Heart right ventricle (tissue), 16 donors: ENCODE measurements at regions of chr1 and their contacts with region 1.

Region 1: GRCh38 chr1:184805667-184806295 is 51.1 kb upstream of the EDEM3 start:
- DNase-seq: peak; percentile 86 to 91
- ATAC-seq: peak; percentile 91 to 98 (median 95)
- H3K4me3 ChIP-seq: no peak overlapping the region
- H3K27ac ChIP-seq: peak overlapping the region in 8 of 10 donors; percentile 7 to 83 (median 41)
- H3K4me1 ChIP-seq: peaks cover 0 to 21% (median 9%) of the 10 kb centered on the region in 9 donors
- H3K27me3 ChIP-seq: no peaks in the 10 kb centered on the region
- CTCF ChIP-seq: peak; percentile 75 to 97 (median 92)

Region 2: DNA sequence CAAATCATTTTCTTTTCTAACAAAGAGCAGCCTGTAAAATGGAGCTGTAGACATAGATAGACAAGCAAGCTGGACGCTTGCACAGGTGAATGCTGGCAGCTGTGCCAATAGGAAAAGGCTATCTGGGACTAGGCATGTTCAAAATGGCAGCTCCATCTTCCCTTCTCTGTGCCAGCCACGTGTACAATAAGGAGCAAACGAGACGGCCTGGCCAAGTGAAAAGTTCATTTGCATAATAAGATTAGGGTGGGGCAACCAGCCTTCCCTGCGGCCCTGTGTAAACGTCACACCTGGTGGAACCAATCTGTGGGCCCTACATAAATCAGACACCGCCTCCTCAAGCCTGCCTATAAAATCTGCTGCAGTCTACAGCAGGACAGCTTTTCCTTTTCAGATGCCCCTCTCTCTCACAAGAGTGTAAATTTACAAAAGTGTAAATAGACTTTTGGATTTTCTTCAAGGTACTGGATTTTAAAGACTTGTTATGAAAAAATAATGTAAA is 34.5 kb before region 1 on chr1:
- intact Hi-C with region 1: no loop called
- DNase-seq: no peak
- ATAC-seq: no peak
- H3K4me3 ChIP-seq: no peak overlapping the region
- H3K27ac ChIP-seq: no peak overlapping the region
- H3K4me1 ChIP-seq: no peaks in the 10 kb centered on the region
- H3K27me3 ChIP-seq: no peaks in the 10 kb centered on the region
- CTCF ChIP-seq: no peak

Region 3: GRCh38 chr1:184878002-184878401 is 72.2 kb after region 1 on chr1:
- intact Hi-C with region 1: no loop called
- DNase-seq: no peak
- ATAC-seq: no peak
- H3K4me3 ChIP-seq: no peak overlapping the region
- H3K27ac ChIP-seq: peak overlapping the region in 6 of 10 donors; percentile 26 to 92 (median 66)
- H3K4me1 ChIP-seq: peaks cover 0 to 79% (median 61%) of the 10 kb centered on the region in 9 donors
- H3K27me3 ChIP-seq: no peaks in the 10 kb centered on the region
- CTCF ChIP-seq: no peak

Region 4: GRCh38 chr1:184982002-184982954 is 176.5 kb after region 1 on chr1:
- intact Hi-C with region 1: loop called (anchors 1 to 5 kb)
- DNase-seq: peak; percentile 77 to 80
- ATAC-seq: peak; percentile 92 to 97 (median 96)
- H3K4me3 ChIP-seq: no peak overlapping the region
- H3K27ac ChIP-seq: peak overlapping the region in 1 of 10 donors; percentile 39
- H3K4me1 ChIP-seq: peaks cover 0 to 9% (median 0%) of the 10 kb centered on the region in 9 donors
- H3K27me3 ChIP-seq: no peaks in the 10 kb centered on the region
- CTCF ChIP-seq: peak; percentile 81 to 99 (median 95)

Region 5: GRCh38 chr1:184994301-184994700 is 188.5 kb after region 1 on chr1:
- intact Hi-C with region 1: no loop called
- DNase-seq: no peak
- ATAC-seq: no peak
- H3K4me3 ChIP-seq: no peak overlapping the region
- H3K27ac ChIP-seq: no peak overlapping the region
- H3K4me1 ChIP-seq: no peaks in the 10 kb centered on the region
- H3K27me3 ChIP-seq: peaks cover 0 to 6% (median 0%) of the 10 kb centered on the region in 7 donors
- CTCF ChIP-seq: no peak

Region 6: DNA sequence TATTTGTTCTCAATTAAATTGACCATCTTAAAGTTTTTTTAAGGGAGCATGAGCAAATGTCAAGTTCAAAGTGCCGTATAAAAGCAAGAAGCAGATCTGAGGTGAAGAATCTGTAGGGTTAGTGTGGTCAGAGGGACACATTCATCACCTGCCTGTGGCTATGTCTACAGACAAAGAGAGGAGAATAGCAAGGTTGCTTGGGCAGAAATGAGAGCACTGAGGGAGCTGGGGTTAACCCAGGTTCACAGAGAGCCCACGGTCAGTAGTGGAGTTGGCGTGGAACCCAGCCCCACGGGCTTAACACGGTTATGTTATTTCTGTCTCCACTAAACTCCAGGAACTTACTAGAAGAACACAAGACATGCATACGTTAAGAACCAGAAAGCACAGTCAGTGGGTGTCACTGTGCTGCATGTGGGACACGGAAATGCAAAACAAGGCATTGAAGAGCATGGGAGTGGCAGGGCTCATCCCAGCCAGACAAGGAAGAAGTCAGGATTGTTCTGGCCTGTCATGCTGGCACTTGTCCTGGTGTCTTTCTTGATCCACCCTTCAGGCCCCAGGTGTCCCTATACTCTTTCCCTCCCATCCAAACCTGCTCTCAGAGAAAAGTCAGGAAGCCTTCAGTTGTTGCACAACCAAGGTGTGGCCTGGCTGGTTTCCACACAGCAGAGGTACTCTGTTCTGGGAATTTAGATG is 606.8 kb after region 1 on chr1:
- intact Hi-C with region 1: loop called in 1 of 10 experiments (anchors 5 kb)
- DNase-seq: no peak
- ATAC-seq: no peak
- H3K4me3 ChIP-seq: no peak overlapping the region
- H3K27ac ChIP-seq: no peak overlapping the region
- H3K4me1 ChIP-seq: peaks cover 0 to 21% (median 0%) of the 10 kb centered on the region in 9 donors
- H3K27me3 ChIP-seq: no peaks in the 10 kb centered on the region
- CTCF ChIP-seq: no peak